Activated naive CD4-positive, alpha-beta T cell treated with anti-CD3 and anti-CD28 coated beads for 36 hours (primary cell): ENCODE measurements at regions of chr5 and their contacts with region 1.

Region 1: DNA sequence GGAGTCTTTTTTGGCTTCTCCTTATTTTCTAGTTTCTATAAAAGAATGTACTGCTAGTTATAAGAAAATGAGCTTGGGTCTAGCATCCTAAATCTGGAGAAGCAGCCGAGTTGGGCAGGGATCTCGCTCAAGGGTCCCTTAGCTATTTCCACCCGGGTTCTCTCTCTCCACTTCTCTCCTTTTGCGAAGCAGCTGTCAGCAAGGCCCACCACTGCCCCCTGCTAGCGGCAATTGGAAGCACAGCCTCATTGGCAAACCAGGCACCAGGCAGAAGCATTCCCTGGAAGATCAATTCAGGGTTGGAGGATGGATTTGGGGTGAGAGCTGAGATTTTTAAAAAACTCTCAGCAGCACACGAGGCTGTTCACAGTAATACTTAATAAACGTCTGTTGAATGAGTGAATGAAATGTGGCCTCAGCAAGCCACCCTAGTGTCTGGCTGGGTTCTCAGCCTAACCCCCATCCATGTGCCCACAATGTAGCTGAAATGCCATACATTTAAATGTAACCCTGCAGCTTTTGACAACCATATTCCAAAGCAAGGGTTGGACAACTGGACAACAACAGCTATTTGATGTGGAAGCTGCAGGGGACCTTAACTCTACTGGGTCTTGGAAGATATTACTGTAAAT is 34.6 kb upstream of the TNIP1 start:
- DNase-seq: peak; percentile 84
- H3K4me3 Mint-ChIP-seq: no peak overlapping the region
- H3K27ac Mint-ChIP-seq: no peak overlapping the region
- H3K4me1 Mint-ChIP-seq: peaks cover 3% of the 10 kb centered on the region
- H3K27me3 Mint-ChIP-seq: no peaks in the 10 kb centered on the region

Region 2: GRCh38 chr5:150846654-150847333 is 268.6 kb before region 1 on chr5:
- CTCF ChIA-PET with region 1: interaction called, 5 read pairs
- intact Hi-C with region 1: loop called (anchors 2 kb)
- DNase-seq: peak; percentile 83
- H3K4me3 Mint-ChIP-seq: peak overlapping the region; percentile 79
- H3K27ac Mint-ChIP-seq: peak overlapping the region; percentile 80
- H3K4me1 Mint-ChIP-seq: peaks cover 25% of the 10 kb centered on the region
- H3K27me3 Mint-ChIP-seq: no peaks in the 10 kb centered on the region

Region 3: DNA sequence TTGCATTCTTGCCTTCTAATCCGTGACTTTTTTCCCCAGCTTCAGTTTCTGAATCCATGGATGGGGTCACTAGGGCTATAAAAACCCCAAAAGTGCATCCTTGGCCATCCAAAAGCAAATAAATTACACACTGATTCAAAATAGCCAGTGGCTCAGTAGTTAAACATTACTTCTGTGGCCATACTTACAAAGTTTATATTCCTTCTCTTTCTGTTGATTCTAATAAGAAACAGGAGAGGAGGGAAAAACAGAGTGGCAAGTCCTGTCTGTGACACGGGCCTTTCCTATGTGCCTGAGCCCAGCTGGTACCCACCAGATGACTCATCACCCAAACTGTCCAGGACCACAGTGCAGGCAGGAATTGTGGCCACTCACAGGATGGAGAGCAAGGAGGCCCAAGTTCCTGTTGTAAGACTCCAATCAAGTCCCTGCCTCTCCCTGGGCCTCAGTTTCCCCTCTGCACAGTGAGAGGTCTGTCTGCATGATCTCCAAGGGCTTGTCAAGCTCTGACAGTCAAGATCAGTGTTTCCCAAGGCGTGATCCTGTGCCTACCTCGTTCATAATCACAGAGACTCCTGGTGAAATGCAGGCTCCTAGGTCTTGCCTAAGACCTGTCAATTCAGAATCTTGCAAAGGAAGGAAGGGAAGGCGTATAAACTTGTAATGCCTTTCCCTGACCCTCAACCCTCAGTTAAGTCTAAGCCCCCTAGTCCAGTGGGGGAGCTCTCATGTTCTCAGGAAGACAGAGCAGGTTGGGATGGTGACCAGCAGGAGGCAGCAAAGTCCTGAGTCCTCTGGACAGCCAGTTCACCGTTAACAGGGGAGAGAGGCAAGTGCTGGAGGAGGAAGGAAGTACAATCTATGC is 64.1 kb before region 1 on chr5:
- CTCF ChIA-PET with region 1: interaction called, 309 read pairs
- intact Hi-C with region 1: loop called (anchors 1 kb)
- DNase-seq: peak; percentile 85
- H3K4me3 Mint-ChIP-seq: no peak overlapping the region
- H3K27ac Mint-ChIP-seq: peak overlapping the region; percentile 16
- H3K4me1 Mint-ChIP-seq: no peaks in the 10 kb centered on the region
- H3K27me3 Mint-ChIP-seq: no peaks in the 10 kb centered on the region

Region 4: GRCh38 chr5:151086905-151087360 is 28.5 kb before region 1 on chr5:
- CTCF ChIA-PET with region 1: interaction called, 39 read pairs
- intact Hi-C with region 1: no loop called
- DNase-seq: peak; percentile 87
- H3K4me3 Mint-ChIP-seq: peak overlapping the region; percentile 72
- H3K27ac Mint-ChIP-seq: peak overlapping the region; percentile 44
- H3K4me1 Mint-ChIP-seq: peaks cover 53% of the 10 kb centered on the region
- H3K27me3 Mint-ChIP-seq: no peaks in the 10 kb centered on the region

Region 5: DNA sequence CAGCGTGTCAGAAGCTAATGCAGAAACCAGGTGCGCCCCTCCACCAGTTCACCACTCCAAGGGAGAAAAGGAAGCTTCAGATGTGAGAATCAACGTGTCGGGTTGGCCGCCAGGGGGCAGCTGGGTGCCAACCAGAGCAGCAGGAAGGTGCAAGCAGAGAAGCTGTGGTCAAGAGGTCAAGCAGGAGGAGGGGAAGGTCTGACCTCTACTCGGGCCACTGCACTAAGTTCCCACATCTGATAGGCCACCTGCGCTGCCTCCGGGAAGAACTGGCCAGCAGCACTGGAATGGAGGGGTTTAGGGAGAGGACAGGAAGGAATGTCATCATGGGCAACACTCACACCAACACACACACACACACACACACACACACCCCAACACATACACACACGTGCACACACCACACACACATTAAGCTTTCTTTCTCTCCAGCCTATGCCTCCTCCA is 10.8 kb after region 1 on chr5:
- CTCF ChIA-PET with region 1: interaction called, 57 read pairs
- intact Hi-C with region 1: no loop called
- DNase-seq: peak; percentile 72
- H3K4me3 Mint-ChIP-seq: no peak overlapping the region
- H3K27ac Mint-ChIP-seq: peak overlapping the region; percentile 90
- H3K4me1 Mint-ChIP-seq: peaks cover 69% of the 10 kb centered on the region
- H3K27me3 Mint-ChIP-seq: no peaks in the 10 kb centered on the region

Region 6: GRCh38 chr5:152349683-152350526 is 1234.5 kb after region 1 on chr5:
- CTCF ChIA-PET with region 1: no interaction called
- intact Hi-C with region 1: no loop called
- DNase-seq: peak; percentile 56
- H3K4me3 Mint-ChIP-seq: no peak overlapping the region
- H3K27ac Mint-ChIP-seq: no peak overlapping the region
- H3K4me1 Mint-ChIP-seq: no peaks in the 10 kb centered on the region
- H3K27me3 Mint-ChIP-seq: peaks cover 8% of the 10 kb centered on the region